ENCODE measurements at regions of chr7 and their contacts with region 1.

Region 1: DNA sequence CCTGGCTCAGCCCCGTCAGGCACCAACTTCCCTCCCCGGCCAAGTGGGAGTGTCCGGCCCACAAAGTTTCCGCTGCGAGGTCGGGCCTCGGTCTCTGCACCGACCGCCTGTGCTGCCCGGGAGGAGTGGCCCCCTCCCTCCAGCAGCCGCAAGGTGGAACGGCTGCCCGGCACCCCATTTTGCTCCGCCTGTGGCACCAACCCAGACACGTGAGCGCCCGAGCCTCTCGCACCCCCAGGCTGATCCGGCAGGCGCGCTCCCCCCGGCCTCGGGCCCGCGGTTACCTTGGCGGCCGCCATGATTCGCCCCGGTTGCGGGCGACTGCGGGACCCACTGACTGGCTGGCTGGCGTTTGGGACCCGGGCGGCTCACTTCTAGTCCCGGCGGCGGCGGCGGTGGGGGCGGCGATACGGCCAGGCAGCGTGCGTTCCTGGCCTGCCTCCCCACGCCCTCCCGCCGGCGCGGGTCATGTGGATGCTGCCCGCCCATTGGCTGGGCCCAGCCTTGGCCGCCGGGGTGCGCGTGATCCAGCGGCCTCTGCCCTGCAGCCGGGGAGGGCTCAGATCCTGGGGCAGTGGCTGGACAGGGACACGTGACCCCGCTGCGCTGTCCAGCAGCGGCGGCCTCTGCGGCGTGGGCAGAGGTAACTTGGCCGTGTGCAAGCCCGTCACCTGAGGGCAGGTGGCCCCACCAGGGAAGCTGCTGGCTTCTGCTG is at the start of gene SLC25A13:
- DNase-seq: peak; percentile 81
- H3K4me3 ChIP-seq: peak within 1 kb of the TSS; percentile 71 to 90 (median 86)
- H3K27ac ChIP-seq: peak within 1 kb of the TSS; percentile 85
- H3K4me1 ChIP-seq: peaks cover 14% of the 10 kb centered on the region
- H3K27me3 ChIP-seq: no peaks in the 10 kb centered on the region
- CTCF ChIP-seq: no peak
- POLR2A ChIP-seq: peak; percentile 74
- total RNA-seq, gene SLC25A13: 34.4 and 36.1 TPM in 2 replicates

Region 2: GRCh38 chr7:96224685-96225084 is 97.1 kb before region 1 on chr7:
- CTCF ChIA-PET with region 1: no interaction called
- POLR2A ChIA-PET with region 1: no interaction called
- dilution Hi-C with region 1: no loop called
- intact Hi-C with region 1: loop called (anchors 5 kb)
- DNase-seq: peak; percentile 31
- H3K4me3 ChIP-seq: no peak overlapping the region
- H3K27ac ChIP-seq: no peak overlapping the region
- H3K4me1 ChIP-seq: no peaks in the 10 kb centered on the region
- H3K27me3 ChIP-seq: no peaks in the 10 kb centered on the region
- CTCF ChIP-seq: peak in 1 of 2 donors; percentile 36
- POLR2A ChIP-seq: no peak

Region 3: GRCh38 chr7:96397936-96398598 is 76.3 kb after region 1 on chr7:
- CTCF ChIA-PET with region 1: no interaction called
- POLR2A ChIA-PET with region 1: no interaction called
- dilution Hi-C with region 1: no loop called
- intact Hi-C with region 1: no loop called
- DNase-seq: no peak
- H3K4me3 ChIP-seq: no peak overlapping the region
- H3K27ac ChIP-seq: no peak overlapping the region
- H3K4me1 ChIP-seq: no peaks in the 10 kb centered on the region
- H3K27me3 ChIP-seq: no peaks in the 10 kb centered on the region
- CTCF ChIP-seq: no peak
- POLR2A ChIP-seq: no peak

Region 4: GRCh38 chr7:96414931-96415292 is 93.1 kb after region 1 on chr7:
- CTCF ChIA-PET with region 1: no interaction called
- POLR2A ChIA-PET with region 1: no interaction called
- dilution Hi-C with region 1: no loop called
- intact Hi-C with region 1: loop called (anchors 1 kb)
- DNase-seq: peak; percentile 10
- H3K4me3 ChIP-seq: no peak overlapping the region
- H3K27ac ChIP-seq: no peak overlapping the region
- H3K4me1 ChIP-seq: peaks cover 6% of the 10 kb centered on the region
- H3K27me3 ChIP-seq: no peaks in the 10 kb centered on the region
- CTCF ChIP-seq: peak; percentile 40 to 41
- POLR2A ChIP-seq: no peak

Region 5: DNA sequence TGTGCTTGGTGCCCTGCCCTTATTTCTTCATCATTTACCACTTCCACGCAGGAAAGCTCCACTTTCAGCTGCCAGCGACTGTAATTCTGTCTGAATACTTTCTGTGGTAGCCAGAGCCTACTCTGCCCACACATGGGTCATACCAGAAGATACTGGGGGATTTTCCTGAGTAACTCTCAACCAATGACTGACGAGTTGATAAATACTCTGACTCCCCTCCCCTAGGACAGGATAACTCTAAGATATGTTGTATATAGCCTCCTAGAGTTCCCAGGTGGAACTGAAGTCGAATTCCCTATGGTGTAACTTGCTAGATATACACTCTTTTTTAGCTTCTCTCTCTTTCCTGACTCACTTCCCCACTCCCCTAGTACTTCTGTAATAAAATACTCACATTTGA is 358.1 kb after region 1 on chr7:
- CTCF ChIA-PET with region 1: no interaction called
- POLR2A ChIA-PET with region 1: no interaction called
- dilution Hi-C with region 1: no loop called
- intact Hi-C with region 1: loop called (anchors 10 kb)
- DNase-seq: no peak
- H3K4me3 ChIP-seq: no peak overlapping the region
- H3K27ac ChIP-seq: no peak overlapping the region
- H3K4me1 ChIP-seq: peaks cover 18% of the 10 kb centered on the region
- H3K27me3 ChIP-seq: no peaks in the 10 kb centered on the region
- CTCF ChIP-seq: no peak
- POLR2A ChIP-seq: no peak

Region 6: DNA sequence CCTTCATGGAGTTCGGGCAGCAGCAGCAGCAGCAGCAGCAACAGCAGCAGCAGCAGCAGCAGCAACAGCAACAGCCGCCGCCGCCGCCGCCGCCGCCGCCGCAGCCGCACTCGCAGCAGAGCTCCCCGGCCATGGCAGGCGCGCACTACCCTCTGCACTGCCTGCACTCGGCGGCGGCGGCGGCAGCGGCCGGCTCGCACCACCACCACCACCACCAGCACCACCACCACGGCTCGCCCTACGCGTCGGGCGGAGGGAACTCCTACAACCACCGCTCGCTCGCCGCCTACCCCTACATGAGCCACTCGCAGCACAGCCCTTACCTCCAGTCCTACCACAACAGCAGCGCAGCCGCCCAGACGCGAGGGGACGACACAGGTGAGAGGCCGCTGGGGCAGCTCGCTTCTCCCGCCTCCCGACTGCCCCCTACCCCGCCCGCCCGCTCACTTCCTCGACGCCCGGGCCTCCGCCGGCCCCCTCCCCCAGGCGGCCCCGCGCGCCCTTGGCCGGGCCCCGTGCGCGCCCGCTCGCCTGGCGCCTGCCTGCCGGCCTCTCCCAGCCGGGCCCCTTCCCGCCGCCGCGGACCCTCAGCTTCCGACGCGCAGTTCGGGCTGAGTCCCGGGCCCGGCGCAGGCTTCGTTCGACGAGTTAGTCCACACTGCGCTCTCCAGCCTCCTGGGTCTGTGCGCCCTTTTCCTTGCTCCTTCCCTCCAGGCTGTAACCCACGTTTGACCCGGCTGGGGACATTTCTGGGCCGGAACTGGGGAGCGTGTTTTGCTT is 684.4 kb after region 1 on chr7:
- CTCF ChIA-PET with region 1: no interaction called
- POLR2A ChIA-PET with region 1: no interaction called
- dilution Hi-C with region 1: no loop called
- intact Hi-C with region 1: loop called (anchors 5 kb)
- DNase-seq: peak; percentile 29
- H3K4me3 ChIP-seq: peak overlapping the region in 1 of 3 experiments; percentile 29
- H3K27ac ChIP-seq: no peak overlapping the region
- H3K4me1 ChIP-seq: peaks cover 3% of the 10 kb centered on the region
- H3K27me3 ChIP-seq: peaks cover 81 to 94% of the 10 kb centered on the region in 2 experiments
- CTCF ChIP-seq: no peak
- POLR2A ChIP-seq: no peak